Naive thymus-derived CD4-positive, alpha-beta T cell (primary cell): ENCODE measurements at regions of chr3 and their contacts with region 1.

Region 1: GRCh38 chr3:108914774-108915641 is 38.7 kb downstream of the GUCA1C start:
- DNase-seq: peak; percentile 17 to 82 (median 71)
- ATAC-seq: peak; percentile 94
- H3K4me3 ChIP-seq: no peak overlapping the region
- H3K4me3 Mint-ChIP-seq: peak overlapping the region; percentile 43 to 72 (median 66)
- H3K27ac ChIP-seq: no peak overlapping the region
- H3K27ac Mint-ChIP-seq: peak overlapping the region in 6 of 9 donors; percentile 11 to 60 (median 32)
- H3K4me1 ChIP-seq: peaks cover 5 to 9% of the 10 kb centered on the region in 2 donors
- H3K4me1 Mint-ChIP-seq: peaks cover 12 to 21% (median 18%) of the 10 kb centered on the region in 7 donors
- H3K27me3 ChIP-seq: no peaks in the 10 kb centered on the region
- H3K27me3 Mint-ChIP-seq: peaks cover 0 to 33% (median 0%) of the 10 kb centered on the region in 5 donors

Region 2: GRCh38 chr3:108234387-108234957 is 680.5 kb before region 1 on chr3:
- CTCF ChIA-PET with region 1: no interaction called
- POLR2A ChIA-PET with region 1: no interaction called
- intact Hi-C with region 1: no loop called
- DNase-seq: no peak
- ATAC-seq: no peak
- H3K4me3 ChIP-seq: no peak overlapping the region
- H3K4me3 Mint-ChIP-seq: no peak overlapping the region
- H3K27ac ChIP-seq: no peak overlapping the region
- H3K27ac Mint-ChIP-seq: no peak overlapping the region
- H3K4me1 ChIP-seq: no peaks in the 10 kb centered on the region
- H3K4me1 Mint-ChIP-seq: peaks cover 0 to 4% (median 0%) of the 10 kb centered on the region in 7 donors
- H3K27me3 ChIP-seq: no peaks in the 10 kb centered on the region
- H3K27me3 Mint-ChIP-seq: peaks cover 0 to 5% (median 0%) of the 10 kb centered on the region in 5 donors

Region 3: GRCh38 chr3:108489771-108490170 is 425.2 kb before region 1 on chr3:
- CTCF ChIA-PET with region 1: interaction called, 10 read pairs
- POLR2A ChIA-PET with region 1: no interaction called
- intact Hi-C with region 1: loop called (anchors 1 kb)
- DNase-seq: peak in 7 of 9 donors; percentile 43 to 64 (median 54)
- ATAC-seq: peak; percentile 86
- H3K4me3 ChIP-seq: no peak overlapping the region
- H3K4me3 Mint-ChIP-seq: no peak overlapping the region
- H3K27ac ChIP-seq: no peak overlapping the region
- H3K27ac Mint-ChIP-seq: no peak overlapping the region
- H3K4me1 ChIP-seq: no peaks in the 10 kb centered on the region
- H3K4me1 Mint-ChIP-seq: peaks cover 0 to 3% (median 0%) of the 10 kb centered on the region in 7 donors
- H3K27me3 ChIP-seq: no peaks in the 10 kb centered on the region
- H3K27me3 Mint-ChIP-seq: peaks cover 0 to 13% (median 0%) of the 10 kb centered on the region in 5 donors

Region 4: DNA sequence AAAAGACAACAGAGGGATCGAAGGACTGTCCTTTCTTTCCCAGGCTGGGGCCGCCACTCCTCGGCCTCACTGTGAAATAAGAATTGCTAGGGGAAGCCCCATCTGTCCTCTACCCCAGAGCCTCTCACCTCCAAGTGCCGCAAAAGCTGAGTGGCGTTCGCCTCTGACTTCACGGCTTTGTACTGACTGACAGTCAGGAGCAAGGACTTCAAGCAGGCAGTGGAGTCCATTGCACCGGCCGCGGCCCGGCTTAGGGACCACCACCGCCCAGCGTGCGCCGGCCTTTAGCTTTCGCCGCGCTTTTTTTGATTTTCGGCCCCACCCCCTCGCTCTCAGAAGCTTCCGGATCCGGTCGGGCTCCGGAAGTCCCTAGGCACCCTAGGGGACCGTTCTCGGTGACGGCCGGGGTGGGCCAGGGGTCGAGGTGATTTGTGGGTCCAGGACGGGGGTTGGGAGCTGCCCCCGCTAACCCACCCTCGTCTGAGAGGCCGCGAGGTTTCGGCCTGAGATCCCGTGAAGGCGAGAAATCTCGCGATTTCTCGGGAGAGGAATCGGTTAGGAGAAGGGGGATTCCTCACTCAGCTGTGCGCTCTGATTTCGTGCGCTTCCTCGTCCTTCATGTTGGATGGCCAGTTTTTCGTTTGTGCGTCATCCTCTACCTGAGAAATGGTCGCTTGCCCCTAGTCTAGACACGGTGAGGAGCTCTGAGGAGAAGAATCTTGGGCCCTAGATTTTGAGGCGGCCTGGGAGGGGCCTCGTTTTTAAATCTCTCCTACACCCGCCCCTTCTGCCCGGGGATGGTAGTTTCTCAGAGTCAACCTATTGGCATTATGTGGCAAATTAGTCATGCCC is 325.6 kb before region 1 on chr3 and contains the starts of genes CIP2A and DZIP3:
- CTCF ChIA-PET with region 1: no interaction called
- POLR2A ChIA-PET with region 1: interaction called, 3 read pairs
- intact Hi-C with region 1: loop called in 1 of 2 experiments (anchors 2 kb)
- DNase-seq: peak; percentile 74 to 88 (median 82)
- ATAC-seq: peak; percentile 83
- H3K4me3 ChIP-seq: peak within 1 kb of the TSS; percentile 87
- H3K4me3 Mint-ChIP-seq: peak within 1 kb of the TSS; percentile 94 to 99 (median 98)
- H3K27ac ChIP-seq: peak within 1 kb of the TSS; percentile 92
- H3K27ac Mint-ChIP-seq: peak within 1 kb of the TSS; percentile 95 to 100 (median 99)
- H3K4me1 ChIP-seq: peaks cover 11 to 15% of the 10 kb centered on the region in 2 donors
- H3K4me1 Mint-ChIP-seq: peaks cover 12 to 53% (median 39%) of the 10 kb centered on the region in 7 donors
- H3K27me3 ChIP-seq: no peaks in the 10 kb centered on the region
- H3K27me3 Mint-ChIP-seq: no peaks in the 10 kb centered on the region
- total RNA-seq, gene CIP2A: 3.4 to 44.2 (median 4.1) TPM
- total RNA-seq, gene DZIP3: 9.6 to 17.3 (median 14.6) TPM

Region 5: DNA sequence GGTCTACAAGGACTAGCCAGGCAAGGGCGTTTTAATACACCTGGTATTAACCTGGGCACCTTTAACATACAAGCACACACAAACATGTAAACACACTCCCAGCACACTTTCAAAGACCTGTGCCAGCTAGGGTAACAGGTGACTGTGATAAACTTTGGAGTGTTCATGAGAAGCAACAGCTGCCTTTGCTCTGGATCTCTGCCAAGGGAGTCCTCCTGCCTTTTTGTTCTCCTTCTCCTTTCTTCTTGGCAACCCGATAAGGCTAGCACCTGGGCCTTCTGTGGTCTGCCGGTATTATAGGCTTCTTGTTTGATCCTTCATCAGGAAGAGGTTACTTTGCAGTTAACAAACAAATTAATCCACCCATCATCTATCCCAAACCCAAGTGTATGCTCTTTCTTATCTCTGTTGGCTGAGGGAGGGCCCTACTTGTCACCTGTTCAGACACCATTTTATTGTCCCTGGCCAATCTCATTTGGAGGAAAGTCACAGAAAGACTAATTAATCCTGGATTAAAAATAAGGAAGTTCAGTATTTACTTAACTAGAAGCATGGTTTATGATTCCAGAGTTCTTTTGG is 157.5 kb before region 1 on chr3 and contains the start of gene RETNLB:
- CTCF ChIA-PET with region 1: no interaction called
- POLR2A ChIA-PET with region 1: no interaction called
- intact Hi-C with region 1: loop called (anchors 5 kb)
- DNase-seq: no peak
- ATAC-seq: no peak
- H3K4me3 ChIP-seq: no peak within 1 kb of the TSS
- H3K4me3 Mint-ChIP-seq: peak within 1 kb of the TSS in 1 of 10 donors; percentile 4
- H3K27ac ChIP-seq: no peak within 1 kb of the TSS
- H3K27ac Mint-ChIP-seq: peak within 1 kb of the TSS in 2 of 9 donors; percentile 14 to 59
- H3K4me1 ChIP-seq: no peaks in the 10 kb centered on the region
- H3K4me1 Mint-ChIP-seq: peaks cover 0 to 21% (median 11%) of the 10 kb centered on the region in 7 donors
- H3K27me3 ChIP-seq: no peaks in the 10 kb centered on the region
- H3K27me3 Mint-ChIP-seq: no peaks in the 10 kb centered on the region
- total RNA-seq, gene RETNLB: not detected

Region 6: GRCh38 chr3:108847187-108847586 is 67.8 kb before region 1 on chr3:
- CTCF ChIA-PET with region 1: interaction called, 3 read pairs
- POLR2A ChIA-PET with region 1: no interaction called
- intact Hi-C with region 1: loop called in 1 of 2 experiments (anchors 2 kb)
- DNase-seq: no peak
- ATAC-seq: no peak
- H3K4me3 ChIP-seq: no peak overlapping the region
- H3K4me3 Mint-ChIP-seq: peak overlapping the region in 9 of 10 donors; percentile 12 to 77 (median 54)
- H3K27ac ChIP-seq: peak overlapping the region; percentile 54
- H3K27ac Mint-ChIP-seq: peak overlapping the region; percentile 20 to 93 (median 74)
- H3K4me1 ChIP-seq: peaks cover 16 to 55% of the 10 kb centered on the region in 2 donors
- H3K4me1 Mint-ChIP-seq: peaks cover 39 to 84% (median 74%) of the 10 kb centered on the region in 7 donors
- H3K27me3 ChIP-seq: no peaks in the 10 kb centered on the region
- H3K27me3 Mint-ChIP-seq: no peaks in the 10 kb centered on the region

Region 7: DNA sequence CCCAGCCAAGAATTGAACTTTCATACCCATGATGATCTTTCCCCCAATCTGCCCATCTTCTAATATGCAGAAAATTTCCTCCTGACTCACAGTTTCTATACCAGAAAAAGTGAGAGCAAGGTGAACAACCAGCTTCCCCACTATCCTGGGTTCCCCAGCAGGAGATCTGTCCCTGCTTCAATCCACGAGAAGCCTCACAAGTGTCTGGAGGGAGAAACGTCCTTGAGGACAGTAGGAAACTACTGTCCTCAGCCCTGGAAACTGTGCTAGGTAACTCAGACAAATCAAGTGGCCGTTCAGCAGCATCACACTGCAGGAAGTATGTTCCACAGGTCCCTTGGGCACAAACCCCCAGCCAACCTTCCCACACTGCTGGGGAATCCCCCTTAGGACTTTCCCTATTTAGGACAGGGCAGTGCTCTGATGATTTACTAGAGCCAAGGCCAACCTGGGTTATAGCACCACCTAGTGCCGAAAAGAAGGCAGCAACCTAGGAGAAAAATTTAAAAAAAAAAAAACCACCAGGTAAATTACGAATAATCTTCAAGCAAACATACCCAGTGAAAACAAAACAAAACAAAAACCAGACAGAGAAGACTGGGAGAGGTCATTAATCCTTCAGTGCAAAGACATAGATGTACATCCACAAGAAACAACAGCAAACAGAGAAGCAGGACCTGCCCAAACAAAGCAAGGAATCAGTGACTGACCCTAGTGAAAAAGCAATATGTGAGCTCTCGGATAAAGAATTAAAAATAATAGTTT is 166.9 kb after region 1 on chr3:
- CTCF ChIA-PET with region 1: no interaction called
- POLR2A ChIA-PET with region 1: no interaction called
- intact Hi-C with region 1: loop called (anchors 1 to 5 kb)
- DNase-seq: peak in 2 of 9 donors; percentile 14 to 30
- ATAC-seq: peak; percentile 84
- H3K4me3 ChIP-seq: no peak overlapping the region
- H3K4me3 Mint-ChIP-seq: no peak overlapping the region
- H3K27ac ChIP-seq: no peak overlapping the region
- H3K27ac Mint-ChIP-seq: peak overlapping the region in 1 of 9 donors; percentile 48
- H3K4me1 ChIP-seq: no peaks in the 10 kb centered on the region
- H3K4me1 Mint-ChIP-seq: peaks cover 0 to 3% (median 0%) of the 10 kb centered on the region in 7 donors
- H3K27me3 ChIP-seq: no peaks in the 10 kb centered on the region
- H3K27me3 Mint-ChIP-seq: peaks cover 25 to 54% (median 33%) of the 10 kb centered on the region in 5 donors

Region 8: DNA sequence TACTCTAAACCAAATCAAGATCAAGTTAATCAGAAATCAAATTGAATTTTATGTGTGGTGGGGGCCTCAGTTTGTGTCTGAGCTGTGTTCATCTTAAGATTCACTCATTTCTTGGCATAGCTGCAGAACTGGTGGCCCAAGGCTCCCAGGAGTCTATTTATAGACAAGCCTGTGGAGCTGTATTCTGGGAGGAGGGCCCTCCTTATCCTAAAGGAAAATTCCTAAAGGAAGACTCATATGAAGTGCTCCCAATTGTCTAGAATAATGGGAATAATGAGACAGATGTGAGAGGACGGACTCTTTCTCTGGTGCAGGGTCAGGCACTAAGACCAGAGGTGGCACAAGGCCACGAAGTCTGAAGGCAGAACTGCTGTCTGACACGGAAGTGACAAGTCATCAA is 260.4 kb after region 1 on chr3:
- CTCF ChIA-PET with region 1: no interaction called
- POLR2A ChIA-PET with region 1: no interaction called
- intact Hi-C with region 1: no loop called
- DNase-seq: no peak
- ATAC-seq: no peak
- H3K4me3 ChIP-seq: no peak overlapping the region
- H3K4me3 Mint-ChIP-seq: no peak overlapping the region
- H3K27ac ChIP-seq: no peak overlapping the region
- H3K27ac Mint-ChIP-seq: no peak overlapping the region
- H3K4me1 ChIP-seq: no peaks in the 10 kb centered on the region
- H3K4me1 Mint-ChIP-seq: no peaks in the 10 kb centered on the region
- H3K27me3 ChIP-seq: no peaks in the 10 kb centered on the region
- H3K27me3 Mint-ChIP-seq: peaks cover 0 to 21% (median 12%) of the 10 kb centered on the region in 5 donors